Left cardiac atrium (tissue), 4 donors: ENCODE measurements at regions of chr22 and their contacts with region 1.

Region 1: DNA sequence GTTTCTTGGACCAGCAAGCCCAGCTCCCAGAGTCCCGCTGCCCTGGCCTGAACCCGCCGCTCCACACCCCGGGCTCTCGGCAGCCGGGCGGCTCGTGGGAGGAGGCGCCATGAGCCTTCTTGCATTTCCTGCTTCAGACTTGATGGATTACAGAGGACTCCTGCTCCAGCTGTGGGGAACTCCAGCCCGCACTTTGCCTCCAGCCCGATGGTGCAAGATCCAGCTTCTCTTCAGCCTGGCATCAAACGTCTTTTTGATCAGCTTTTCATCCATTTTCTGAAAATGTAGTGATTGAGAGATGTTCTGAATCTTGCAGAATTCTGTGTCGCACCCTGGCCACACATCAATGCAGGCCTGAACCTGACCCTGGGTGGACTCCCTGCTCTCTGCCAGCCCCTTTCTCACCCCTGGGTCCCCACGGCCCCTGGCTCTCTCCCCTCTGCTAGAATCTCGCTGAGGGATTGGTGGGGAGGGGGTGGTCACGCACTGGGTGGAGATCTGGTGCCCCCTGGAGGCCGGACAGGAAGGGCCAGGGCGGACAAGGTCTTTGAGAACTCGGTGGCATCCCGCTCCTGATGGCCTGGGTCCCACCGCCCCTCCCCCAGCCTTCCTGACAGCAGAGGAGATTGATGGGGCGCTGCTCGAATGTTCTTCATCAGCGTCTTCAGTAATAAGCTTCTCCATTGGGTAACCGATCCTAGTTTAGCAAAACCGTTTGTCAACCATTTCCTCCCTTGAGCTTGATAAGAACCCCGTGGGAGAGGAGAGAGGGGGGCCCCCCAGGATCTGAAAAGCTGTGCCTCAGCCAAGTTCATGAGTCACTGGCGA is 12.1 kb upstream of the NFAM1 start:
- DNase-seq: peak; percentile 83
- ATAC-seq: peak; percentile 82 to 89

Region 2: DNA sequence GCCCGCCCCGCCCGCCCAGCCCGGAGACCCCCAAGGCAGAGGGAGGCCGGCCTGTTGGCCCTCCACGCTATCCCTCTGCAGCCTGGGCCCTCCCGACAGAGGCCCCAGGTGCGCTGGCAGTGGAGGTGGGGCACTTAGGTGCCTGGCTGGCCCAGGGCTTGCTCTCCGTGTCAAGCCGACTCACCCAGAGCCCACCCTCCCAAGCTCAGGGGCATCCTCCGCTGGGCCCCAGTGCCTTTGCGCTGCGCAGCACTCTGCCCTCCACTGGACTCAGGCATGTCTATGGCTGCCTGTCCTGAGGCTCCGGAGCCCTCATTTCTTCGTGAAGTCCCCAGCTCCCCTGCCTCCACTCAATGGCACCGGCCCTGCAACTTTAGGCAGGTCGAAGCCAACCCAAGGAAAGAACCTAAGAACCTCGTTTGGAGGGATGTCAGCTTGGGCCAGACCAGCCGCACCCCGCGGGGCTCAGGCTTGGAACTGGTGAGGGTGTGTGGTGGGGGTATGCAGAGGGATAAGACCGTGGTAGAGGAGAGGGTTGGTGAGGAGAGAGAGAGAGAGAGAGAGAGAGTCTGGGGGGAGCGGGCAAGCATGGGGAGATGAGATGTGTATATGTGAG is 486.2 kb before region 1 on chr22:
- intact Hi-C with region 1: loop called (anchors 5 to 10 kb)
- DNase-seq: no peak
- ATAC-seq: peak; percentile 10 to 15

Region 3: DNA sequence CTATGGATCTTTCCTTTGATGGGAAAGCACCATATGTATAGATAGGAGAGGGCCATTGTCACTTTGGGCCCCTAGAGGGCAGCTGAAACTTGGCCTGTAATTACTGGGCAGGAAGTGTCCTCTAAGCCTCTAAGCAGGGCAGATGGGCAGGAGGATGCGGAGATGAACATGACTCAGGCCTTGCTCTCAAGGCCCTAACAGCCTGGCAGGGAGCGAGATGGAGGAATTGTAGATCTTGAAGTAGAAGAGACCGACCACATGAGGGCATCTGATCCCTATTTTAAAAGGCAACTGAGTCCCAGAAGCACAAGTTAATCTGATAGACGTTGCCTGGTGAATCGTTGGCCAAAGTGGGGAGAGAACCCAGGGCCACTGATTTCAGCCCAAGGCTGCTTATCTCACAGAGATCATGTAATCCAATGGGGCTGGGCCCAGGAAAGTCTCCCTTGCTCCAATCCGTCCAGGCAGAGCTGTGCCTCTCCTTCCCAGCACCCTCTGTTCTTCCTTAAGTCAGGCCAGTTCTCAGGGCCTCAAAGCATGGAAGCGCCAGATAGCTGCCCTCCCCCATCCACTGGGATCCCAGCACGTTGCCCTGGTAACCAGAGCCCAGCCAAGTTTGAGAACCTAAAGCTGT is 477.6 kb before region 1 on chr22:
- intact Hi-C with region 1: loop called in 1 of 2 experiments (anchors 10 kb)
- DNase-seq: no peak
- ATAC-seq: peak; percentile 42 to 57

Region 4: GRCh38 chr22:42369245-42370041 is 74.8 kb before region 1 on chr22:
- intact Hi-C with region 1: no loop called
- DNase-seq: peak; percentile 94
- ATAC-seq: peak; percentile 97